Naive thymus-derived CD8-positive, alpha-beta T cell (primary cell): ENCODE measurements at regions of chr20 and their contacts with region 1.

Region 1: DNA sequence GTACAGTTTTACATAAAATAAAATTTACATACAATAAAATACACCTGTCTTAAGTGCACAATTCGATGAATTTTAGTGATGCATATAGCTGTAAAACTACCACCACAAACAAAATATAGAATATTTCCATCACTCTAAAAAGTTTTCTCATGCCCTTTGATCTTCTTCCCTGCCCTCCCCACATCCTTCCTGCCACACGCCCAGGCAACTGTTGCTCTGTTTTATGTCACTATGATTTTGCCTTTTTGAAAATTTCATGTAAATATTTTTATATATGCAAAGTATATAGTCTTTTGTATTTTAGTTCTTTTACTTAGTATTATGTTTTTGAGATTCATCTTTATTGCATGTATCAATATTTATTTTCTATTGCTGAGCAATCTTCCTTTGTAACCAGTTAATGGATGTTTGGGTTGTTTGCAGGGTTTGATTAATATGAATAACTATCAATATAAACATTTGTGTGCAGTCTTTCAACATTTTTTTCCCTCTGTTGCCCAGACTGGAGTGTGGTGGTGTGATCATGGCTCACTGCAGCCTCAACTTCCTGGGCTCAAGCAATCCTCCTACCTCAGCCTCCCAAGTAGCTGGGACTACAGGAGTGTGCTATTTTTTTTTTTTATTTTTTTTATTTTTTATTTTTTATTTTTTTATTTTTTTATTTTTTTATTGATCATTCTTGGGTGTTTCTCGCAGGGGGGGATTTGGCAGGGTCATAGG is 23.8 kb upstream of the SAMHD1 start:
- DNase-seq: peak; percentile 52 to 91 (median 76)
- ATAC-seq: peak; percentile 84 to 92
- H3K4me3 Mint-ChIP-seq: peak overlapping the region; percentile 33 to 79 (median 62)
- H3K27ac Mint-ChIP-seq: peak overlapping the region; percentile 75 to 99 (median 93)
- H3K4me1 Mint-ChIP-seq: peaks cover 10 to 50% (median 38%) of the 10 kb centered on the region in 4 donors
- H3K27me3 Mint-ChIP-seq: no peaks in the 10 kb centered on the region

Region 2: GRCh38 chr20:36908603-36909002 is 66.7 kb before region 1 on chr20:
- POLR2A ChIA-PET with region 1: no interaction called
- DNase-seq: no peak
- ATAC-seq: no peak
- H3K4me3 Mint-ChIP-seq: no peak overlapping the region
- H3K27ac Mint-ChIP-seq: peak overlapping the region in 3 of 10 donors; percentile 29 to 62 (median 43)
- H3K4me1 Mint-ChIP-seq: peaks cover 3 to 22% (median 13%) of the 10 kb centered on the region in 4 donors
- H3K27me3 Mint-ChIP-seq: no peaks in the 10 kb centered on the region

Region 3: DNA sequence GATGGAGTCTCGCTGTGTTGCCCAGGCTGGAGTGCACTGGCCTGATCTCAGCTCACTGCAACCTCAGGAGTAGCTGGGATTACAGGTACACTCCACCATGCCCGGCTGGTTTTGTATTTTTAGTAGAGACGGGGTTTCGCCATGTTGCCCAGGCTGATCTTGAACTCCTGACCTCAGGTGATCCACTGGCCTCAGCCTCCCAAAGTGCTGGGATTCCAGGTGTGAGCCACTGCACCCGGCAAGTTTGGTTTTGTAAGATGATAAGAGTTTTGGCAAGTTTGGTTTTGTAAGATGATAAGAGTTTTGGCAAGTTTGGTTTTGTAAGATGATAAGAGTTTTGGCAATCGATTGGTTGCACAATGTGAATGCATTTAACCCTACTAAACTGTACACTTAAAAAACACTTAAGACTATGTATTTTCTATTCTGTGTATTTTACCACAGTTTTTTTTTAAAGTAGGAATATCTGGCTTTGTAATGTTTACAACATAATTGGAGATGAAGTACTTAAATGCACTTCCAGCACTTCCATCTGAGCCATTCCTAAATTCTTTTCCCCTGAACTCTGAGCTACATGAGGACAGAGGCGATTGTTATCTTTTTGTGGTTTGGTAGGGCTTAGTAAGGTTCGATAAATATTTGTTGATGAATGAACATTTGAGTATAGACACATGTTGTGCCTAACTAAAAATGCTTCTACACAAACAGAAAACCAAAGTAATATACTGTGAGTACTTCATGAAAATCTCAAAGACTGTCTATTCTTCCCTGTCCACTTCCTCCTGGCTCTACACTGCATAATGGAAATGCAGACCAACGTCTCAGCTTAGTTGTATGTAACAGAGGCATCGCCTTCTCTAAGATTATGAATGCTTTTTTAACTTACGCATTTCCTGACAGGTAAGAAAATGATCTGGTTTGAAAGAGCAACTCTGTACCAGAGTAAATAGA is 42.5 kb before region 1 on chr20:
- POLR2A ChIA-PET with region 1: interaction called, 14 read pairs
- DNase-seq: no peak
- ATAC-seq: no peak
- H3K4me3 Mint-ChIP-seq: peak overlapping the region in 8 of 10 donors; percentile 2 to 60 (median 40)
- H3K27ac Mint-ChIP-seq: peak overlapping the region; percentile 85 to 100 (median 94)
- H3K4me1 Mint-ChIP-seq: peaks cover 19 to 75% (median 51%) of the 10 kb centered on the region in 4 donors
- H3K27me3 Mint-ChIP-seq: no peaks in the 10 kb centered on the region

Region 4: DNA sequence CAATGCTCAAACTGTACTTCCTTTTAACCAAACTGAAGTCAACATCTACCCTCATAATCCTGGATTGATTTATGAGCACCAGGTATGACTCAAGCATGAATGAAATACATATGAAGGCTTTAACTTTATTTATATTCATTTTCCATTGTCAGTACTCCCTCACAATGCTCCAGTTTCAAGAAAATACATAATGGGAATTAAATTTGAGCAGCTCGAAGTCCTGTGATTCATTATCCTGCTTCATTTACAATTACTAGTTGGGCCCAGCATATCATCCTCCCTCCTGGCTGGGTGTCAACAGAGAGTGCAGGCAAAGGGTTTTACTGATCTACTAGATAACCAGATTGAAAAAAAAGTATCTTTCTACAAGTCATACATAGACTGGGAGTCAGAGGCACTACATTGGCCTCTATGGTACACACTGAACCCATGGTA is 33.8 kb before region 1 on chr20:
- POLR2A ChIA-PET with region 1: interaction called, 18 read pairs
- DNase-seq: no peak
- ATAC-seq: peak in 1 of 2 donors; percentile 37
- H3K4me3 Mint-ChIP-seq: peak overlapping the region; percentile 40 to 78 (median 68)
- H3K27ac Mint-ChIP-seq: peak overlapping the region; percentile 89 to 99 (median 99)
- H3K4me1 Mint-ChIP-seq: peaks cover 18 to 91% (median 78%) of the 10 kb centered on the region in 4 donors
- H3K27me3 Mint-ChIP-seq: no peaks in the 10 kb centered on the region

Region 5: DNA sequence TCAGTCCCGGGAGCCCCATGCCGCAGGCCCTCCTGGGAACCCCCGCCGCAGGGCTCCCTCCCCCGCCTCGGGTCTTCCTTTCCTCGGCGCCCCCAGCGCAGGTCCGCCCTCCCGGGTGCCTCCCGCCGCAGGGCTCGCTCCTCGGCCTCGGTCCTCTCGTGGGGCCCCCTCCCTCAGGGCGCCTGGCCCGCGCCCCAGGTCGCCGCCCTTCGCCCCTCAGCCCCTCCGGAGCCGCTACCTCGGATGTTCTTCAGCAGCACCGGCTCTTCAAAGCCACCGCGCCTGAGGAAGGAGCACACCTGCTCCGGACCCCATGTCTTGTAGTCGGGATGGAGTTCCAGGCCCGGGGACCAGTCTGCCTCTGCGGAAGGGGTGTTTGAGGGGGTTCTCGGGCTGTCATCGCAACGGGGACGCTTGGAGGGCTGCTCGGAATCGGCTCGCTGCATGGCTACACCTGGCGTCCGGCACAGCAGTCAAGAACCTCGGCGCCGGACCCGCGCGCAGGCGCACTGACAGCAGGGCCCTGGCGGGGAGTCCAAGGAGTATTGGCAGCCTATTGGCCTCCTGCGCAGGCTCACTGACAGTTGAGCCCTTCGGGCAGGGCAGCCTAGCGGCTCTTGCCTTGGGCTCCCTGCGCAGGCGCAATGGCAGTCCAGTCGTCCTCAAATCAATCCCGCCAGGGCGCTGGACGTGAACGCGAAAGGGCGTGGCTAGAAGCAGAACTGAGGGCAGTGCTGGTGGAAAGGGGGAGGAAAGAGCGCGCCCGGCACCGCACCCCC is 23.9 kb before region 1 on chr20 and contains the start of gene SAMHD1:
- POLR2A ChIA-PET with region 1: interaction called, 41 read pairs
- DNase-seq: peak; percentile 66 to 90 (median 82)
- ATAC-seq: peak; percentile 71 to 76
- H3K4me3 Mint-ChIP-seq: peak within 1 kb of the TSS; percentile 88 to 100 (median 97)
- H3K27ac Mint-ChIP-seq: peak within 1 kb of the TSS; percentile 94 to 99 (median 98)
- H3K4me1 Mint-ChIP-seq: peaks cover 17 to 62% (median 47%) of the 10 kb centered on the region in 4 donors
- H3K27me3 Mint-ChIP-seq: no peaks in the 10 kb centered on the region
- polyA plus RNA-seq, gene SAMHD1: 212 to 247 (median 219) TPM

Region 6: DNA sequence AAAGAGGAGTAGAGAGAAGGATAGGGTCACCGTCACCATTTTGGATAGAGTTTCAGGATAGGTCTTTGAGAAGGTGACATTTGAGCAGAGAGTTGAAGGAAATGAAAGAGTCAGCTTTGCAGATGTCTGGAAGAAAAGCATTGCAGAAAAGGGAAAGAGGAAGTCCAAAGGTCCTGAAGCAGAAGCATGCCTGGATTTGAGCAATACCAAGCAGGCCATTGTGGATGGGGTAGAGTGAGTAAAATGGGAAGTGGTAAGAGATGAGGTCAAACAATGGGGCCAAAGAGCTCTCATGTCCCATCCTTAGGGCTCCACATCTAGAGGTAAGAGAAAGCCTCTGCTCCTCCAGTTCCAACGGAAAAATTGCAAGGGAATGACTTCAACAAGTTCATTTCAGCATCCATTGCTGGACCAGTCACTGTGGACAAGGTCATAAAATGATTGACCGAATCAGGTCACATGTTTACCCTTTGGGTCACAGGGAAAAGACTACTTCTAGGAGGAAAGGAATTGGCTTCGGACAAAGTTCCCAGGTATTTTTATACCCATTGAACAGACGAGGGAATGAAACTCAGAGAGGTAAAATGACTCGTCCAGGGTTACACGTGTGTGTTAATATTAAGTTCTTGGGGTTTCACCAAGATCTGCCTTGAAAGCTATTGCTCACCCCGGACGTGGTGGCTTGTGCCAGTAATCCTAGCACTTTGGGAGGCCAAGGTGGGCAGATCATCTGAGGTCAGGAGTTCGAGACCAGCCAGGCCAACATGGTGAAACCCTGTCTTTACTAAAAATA is 17.2 kb before region 1 on chr20:
- POLR2A ChIA-PET with region 1: interaction called, 13 read pairs
- DNase-seq: no peak
- ATAC-seq: no peak
- H3K4me3 Mint-ChIP-seq: no peak overlapping the region
- H3K27ac Mint-ChIP-seq: peak overlapping the region in 7 of 10 donors; percentile 2 to 76 (median 44)
- H3K4me1 Mint-ChIP-seq: peaks cover 17 to 54% (median 34%) of the 10 kb centered on the region in 4 donors
- H3K27me3 Mint-ChIP-seq: no peaks in the 10 kb centered on the region

Region 7: GRCh38 chr20:36988494-36988966 is 13.3 kb after region 1 on chr20:
- POLR2A ChIA-PET with region 1: interaction called, 10 read pairs
- DNase-seq: peak in 5 of 10 donors; percentile 38 to 73 (median 61)
- ATAC-seq: peak; percentile 89 to 93
- H3K4me3 Mint-ChIP-seq: peak overlapping the region; percentile 20 to 63 (median 42)
- H3K27ac Mint-ChIP-seq: peak overlapping the region; percentile 77 to 95 (median 92)
- H3K4me1 Mint-ChIP-seq: peaks cover 20 to 54% (median 49%) of the 10 kb centered on the region in 4 donors
- H3K27me3 Mint-ChIP-seq: no peaks in the 10 kb centered on the region

Region 8: DNA sequence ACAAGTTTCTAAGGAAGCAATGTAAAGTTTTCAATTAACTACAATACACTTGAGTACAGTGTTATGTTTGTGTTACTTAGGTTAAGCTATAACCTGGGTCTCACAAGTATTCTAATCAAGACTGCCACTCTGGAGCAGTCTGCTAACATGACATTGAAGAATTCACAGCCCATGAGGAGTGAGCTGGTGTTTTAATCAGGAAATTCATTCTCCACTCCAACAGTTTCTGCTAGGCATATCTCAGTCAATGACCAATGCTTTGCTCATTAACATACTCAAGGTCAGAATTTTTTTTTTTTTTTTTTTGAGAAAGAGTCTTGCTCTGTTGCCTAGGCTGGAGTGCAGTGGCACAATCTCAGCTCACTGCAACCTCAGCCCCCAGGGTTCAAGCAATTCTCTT is 35.9 kb after region 1 on chr20:
- POLR2A ChIA-PET with region 1: interaction called, 11 read pairs
- DNase-seq: no peak
- ATAC-seq: no peak
- H3K4me3 Mint-ChIP-seq: no peak overlapping the region
- H3K27ac Mint-ChIP-seq: peak overlapping the region in 8 of 10 donors; percentile 48 to 82 (median 64)
- H3K4me1 Mint-ChIP-seq: peaks cover 7 to 54% (median 30%) of the 10 kb centered on the region in 4 donors
- H3K27me3 Mint-ChIP-seq: no peaks in the 10 kb centered on the region